PC-9 (cell line): ENCODE measurements at regions of chr11 and their contacts with region 1.

Region 1: GRCh38 chr11:16605894-16606783 is 132.3 kb upstream of the C11orf58 start:
- DNase-seq: peak; percentile 78 to 86
- H3K4me3 ChIP-seq: peak overlapping the region; percentile 93
- H3K27ac ChIP-seq: peak overlapping the region; percentile 49
- H3K4me1 ChIP-seq: no peaks in the 10 kb centered on the region
- H3K27me3 ChIP-seq: no peaks in the 10 kb centered on the region
- CTCF ChIP-seq: peak; percentile 91

Region 2: DNA sequence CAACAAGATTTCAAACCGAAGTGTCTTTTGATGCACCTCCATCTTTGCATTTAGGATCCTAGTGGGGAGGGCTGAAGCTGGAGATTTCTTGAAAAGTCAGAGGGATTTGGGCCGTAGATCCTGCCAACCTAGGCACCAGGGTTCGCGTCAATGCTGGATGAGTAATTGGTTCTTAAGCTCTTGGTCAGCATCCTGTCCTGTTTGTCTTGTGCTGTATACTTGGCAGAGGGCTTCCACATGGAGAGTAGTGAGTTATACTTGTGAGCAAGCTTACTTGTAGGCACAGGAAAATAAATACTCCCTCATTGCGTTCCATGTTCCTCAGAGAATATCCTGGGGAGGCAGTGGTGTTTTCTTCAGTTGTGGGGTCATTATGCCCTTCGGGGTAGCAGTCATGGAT is 1478.8 kb before region 1 on chr11:
- CTCF ChIA-PET with region 1: no interaction called
- POLR2A ChIA-PET with region 1: no interaction called
- intact Hi-C with region 1: no loop called
- DNase-seq: no peak
- H3K4me3 ChIP-seq: no peak overlapping the region
- H3K27ac ChIP-seq: no peak overlapping the region
- H3K4me1 ChIP-seq: no peaks in the 10 kb centered on the region
- H3K27me3 ChIP-seq: 0 out of 2 replicates have a peak, but pooled peaks cover 3% of the 10 kb centered on the region
- CTCF ChIP-seq: no peak

Region 3: GRCh38 chr11:15769203-15769602 is 836.9 kb before region 1 on chr11:
- CTCF ChIA-PET with region 1: no interaction called
- POLR2A ChIA-PET with region 1: no interaction called
- intact Hi-C with region 1: loop called (anchors 2 kb)
- DNase-seq: peak; percentile 44 to 77
- H3K4me3 ChIP-seq: no peak overlapping the region
- H3K27ac ChIP-seq: peak overlapping the region; percentile 76
- H3K4me1 ChIP-seq: peaks cover 39% of the 10 kb centered on the region
- H3K27me3 ChIP-seq: no peaks in the 10 kb centered on the region
- CTCF ChIP-seq: no peak

Region 4: GRCh38 chr11:15826826-15827225 is 779.3 kb before region 1 on chr11:
- CTCF ChIA-PET with region 1: no interaction called
- POLR2A ChIA-PET with region 1: no interaction called
- intact Hi-C with region 1: loop called (anchors 1 kb)
- DNase-seq: peak; percentile 39 to 45
- H3K4me3 ChIP-seq: no peak overlapping the region
- H3K27ac ChIP-seq: no peak overlapping the region
- H3K4me1 ChIP-seq: peaks cover 14% of the 10 kb centered on the region
- H3K27me3 ChIP-seq: no peaks in the 10 kb centered on the region
- CTCF ChIP-seq: peak; percentile 67

Region 5: DNA sequence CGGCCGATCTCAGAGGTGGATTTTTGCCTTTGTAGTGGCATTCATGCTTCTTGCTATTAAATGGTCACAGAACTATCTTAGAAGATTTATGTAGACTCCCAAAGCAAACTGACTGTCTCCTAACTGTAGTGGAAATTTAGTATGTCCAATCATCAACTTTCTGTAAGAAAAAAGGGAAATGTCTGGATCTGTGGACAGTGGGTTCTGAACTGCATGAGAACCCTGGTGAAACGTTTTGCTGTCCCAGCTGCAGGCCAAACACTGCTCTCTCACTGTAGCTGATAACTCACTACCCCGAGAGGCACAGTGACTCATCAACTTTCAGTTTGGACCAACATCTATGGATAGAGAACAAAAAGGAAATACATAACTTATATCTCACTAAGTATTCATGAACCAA is 636.9 kb before region 1 on chr11:
- CTCF ChIA-PET with region 1: no interaction called
- POLR2A ChIA-PET with region 1: no interaction called
- intact Hi-C with region 1: loop called (anchors 5 kb)
- DNase-seq: peak; percentile 35 to 48
- H3K4me3 ChIP-seq: no peak overlapping the region; the same call in 1 of the 2 replicates
- H3K27ac ChIP-seq: peak overlapping the region; percentile 63
- H3K4me1 ChIP-seq: peaks cover 61% of the 10 kb centered on the region
- H3K27me3 ChIP-seq: no peaks in the 10 kb centered on the region
- CTCF ChIP-seq: no peak

Region 6: DNA sequence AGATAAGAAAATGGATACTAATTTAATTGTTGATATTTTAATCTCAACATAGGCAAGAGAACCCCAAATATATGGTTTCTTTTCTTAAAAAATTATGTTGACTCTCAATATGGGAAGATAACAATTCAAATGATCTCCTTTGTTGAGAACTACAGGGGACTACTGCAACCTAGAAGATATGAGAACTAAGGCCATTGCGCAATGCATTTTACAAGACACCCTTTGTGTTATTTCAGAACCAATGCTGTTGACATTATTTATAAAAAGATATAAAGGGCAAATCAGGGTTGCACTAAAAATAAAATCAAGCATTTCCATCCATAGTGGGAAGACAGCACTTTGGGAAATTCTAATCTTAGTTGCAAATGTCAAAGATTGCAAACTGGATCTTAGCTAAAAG is 572.1 kb before region 1 on chr11:
- CTCF ChIA-PET with region 1: no interaction called
- POLR2A ChIA-PET with region 1: no interaction called
- intact Hi-C with region 1: loop called (anchors 5 kb)
- DNase-seq: no peak
- H3K4me3 ChIP-seq: no peak overlapping the region
- H3K27ac ChIP-seq: no peak overlapping the region
- H3K4me1 ChIP-seq: no peaks in the 10 kb centered on the region
- H3K27me3 ChIP-seq: no peaks in the 10 kb centered on the region
- CTCF ChIP-seq: no peak

Region 7: GRCh38 chr11:16418428-16419097 is 187.6 kb before region 1 on chr11:
- CTCF ChIA-PET with region 1: interaction called, 12 read pairs
- POLR2A ChIA-PET with region 1: no interaction called
- intact Hi-C with region 1: no loop called
- DNase-seq: no peak
- H3K4me3 ChIP-seq: no peak overlapping the region
- H3K27ac ChIP-seq: no peak overlapping the region
- H3K4me1 ChIP-seq: no peaks in the 10 kb centered on the region
- H3K27me3 ChIP-seq: no peaks in the 10 kb centered on the region
- CTCF ChIP-seq: no peak

Region 8: GRCh38 chr11:17256512-17256911 is 650.4 kb after region 1 on chr11:
- CTCF ChIA-PET with region 1: no interaction called
- POLR2A ChIA-PET with region 1: no interaction called
- intact Hi-C with region 1: no loop called
- DNase-seq: peak in 1 of 2 experiments; percentile 77
- H3K4me3 ChIP-seq: no peak overlapping the region
- H3K27ac ChIP-seq: peak overlapping the region; percentile 79
- H3K4me1 ChIP-seq: peaks cover 15% of the 10 kb centered on the region
- H3K27me3 ChIP-seq: no peaks in the 10 kb centered on the region
- CTCF ChIP-seq: no peak